Activated CD4-positive, alpha-beta memory T cell treated with anti-CD3 and anti-CD28 coated beads for 36 hours (primary cell): ENCODE measurements at regions of chr3 and their contacts with region 1.

Region 1: GRCh38 chr3:197224034-197224444 is 74.4 kb downstream of the DLG1 start:
- DNase-seq: no peak
- H3K4me3 Mint-ChIP-seq: no peak overlapping the region
- H3K27ac Mint-ChIP-seq: no peak overlapping the region
- H3K4me1 Mint-ChIP-seq: peaks cover 30% of the 10 kb centered on the region
- H3K27me3 Mint-ChIP-seq: no peaks in the 10 kb centered on the region

Region 2: DNA sequence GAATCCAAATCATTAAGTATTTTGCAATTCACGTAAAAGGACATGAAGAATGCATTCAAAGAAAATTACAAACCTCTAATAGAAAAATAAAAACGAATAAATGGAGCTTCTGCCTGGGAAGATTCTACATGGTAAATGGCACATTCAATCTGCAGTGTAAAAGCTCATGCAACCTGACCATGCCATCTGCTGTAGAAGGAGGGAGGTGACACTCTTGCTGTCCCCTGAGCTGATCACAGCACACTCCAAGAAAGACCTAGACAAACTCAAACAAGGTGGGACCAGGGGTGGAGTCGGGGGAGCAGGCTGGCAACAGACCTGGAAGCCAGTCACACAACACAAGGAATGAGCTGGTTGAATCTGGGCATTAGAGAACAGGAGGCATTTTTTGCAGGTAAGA is 230.0 kb after region 1 on chr3:
- CTCF ChIA-PET with region 1: interaction called, 10 read pairs
- POLR2A ChIA-PET with region 1: no interaction called
- intact Hi-C with region 1: no loop called
- DNase-seq: peak; percentile 20
- H3K4me3 Mint-ChIP-seq: no peak overlapping the region
- H3K27ac Mint-ChIP-seq: no peak overlapping the region
- H3K4me1 Mint-ChIP-seq: peaks cover 12% of the 10 kb centered on the region
- H3K27me3 Mint-ChIP-seq: peaks cover 3% of the 10 kb centered on the region

Region 3: DNA sequence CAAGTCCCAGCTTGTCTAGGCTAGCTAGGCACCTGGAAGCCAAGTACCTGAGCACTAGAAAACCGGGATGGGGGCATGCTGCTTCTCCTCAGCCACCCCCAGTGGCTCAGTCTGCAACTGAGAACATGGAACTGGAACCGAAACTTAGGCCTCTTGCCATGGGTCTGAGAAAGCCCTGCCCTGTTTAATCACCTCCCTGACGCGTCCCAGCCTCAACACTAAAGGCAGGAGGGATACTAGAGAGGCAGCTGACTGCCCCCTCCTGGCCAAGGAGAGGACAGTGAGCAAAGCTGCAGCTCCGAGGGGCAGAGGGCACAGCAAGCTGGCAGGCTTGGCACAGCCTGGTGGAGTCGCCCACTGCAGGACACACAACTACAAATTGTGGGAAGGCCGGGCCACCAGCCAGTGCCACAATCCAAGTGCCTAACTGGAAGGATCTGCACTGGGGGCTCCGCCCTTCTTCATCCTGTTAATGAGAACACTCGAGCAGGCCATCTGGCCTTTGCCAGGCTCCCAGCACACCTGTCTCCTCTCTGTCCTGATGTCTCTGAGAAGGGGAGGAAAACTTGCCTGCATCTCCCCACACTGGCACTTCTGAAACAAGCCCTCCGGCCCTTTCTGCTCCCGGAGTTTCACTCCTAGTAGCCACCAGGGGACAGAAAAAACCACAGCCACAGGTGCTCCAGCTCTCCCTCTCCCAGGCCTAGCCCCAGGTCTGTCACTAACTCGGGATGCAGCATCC is 278.0 kb after region 1 on chr3:
- CTCF ChIA-PET with region 1: interaction called, 38 read pairs
- POLR2A ChIA-PET with region 1: no interaction called
- intact Hi-C with region 1: loop called (anchors 1 kb)
- DNase-seq: peak; percentile 71
- H3K4me3 Mint-ChIP-seq: no peak overlapping the region
- H3K27ac Mint-ChIP-seq: no peak overlapping the region
- H3K4me1 Mint-ChIP-seq: no peaks in the 10 kb centered on the region
- H3K27me3 Mint-ChIP-seq: no peaks in the 10 kb centered on the region

Region 4: DNA sequence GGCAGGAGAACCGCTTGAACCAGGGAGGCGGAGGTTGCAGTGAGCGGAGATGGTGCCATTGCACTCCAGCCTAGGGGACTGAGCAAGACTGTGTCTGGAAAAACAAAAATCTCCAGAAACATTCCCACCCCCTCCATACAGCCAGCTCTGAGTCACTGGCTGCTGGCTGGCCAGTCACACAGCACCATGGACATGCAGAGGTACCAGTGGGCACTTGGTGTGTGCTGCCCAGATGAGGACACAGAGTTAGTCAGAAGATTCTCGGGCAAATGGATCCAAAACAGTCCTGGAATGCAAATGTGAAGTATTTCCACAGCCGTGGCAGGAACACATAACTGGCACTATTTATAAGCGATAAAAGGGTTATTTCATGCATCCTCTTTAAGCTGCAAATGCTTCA is 287.1 kb after region 1 on chr3:
- CTCF ChIA-PET with region 1: interaction called, 20 read pairs
- POLR2A ChIA-PET with region 1: no interaction called
- intact Hi-C with region 1: loop called (anchors 1 kb)
- DNase-seq: no peak
- H3K4me3 Mint-ChIP-seq: no peak overlapping the region
- H3K27ac Mint-ChIP-seq: no peak overlapping the region
- H3K4me1 Mint-ChIP-seq: peaks cover 4% of the 10 kb centered on the region
- H3K27me3 Mint-ChIP-seq: no peaks in the 10 kb centered on the region